ENCODE measurements at regions of chr13 and their contacts with region 1.

Region 1: DNA sequence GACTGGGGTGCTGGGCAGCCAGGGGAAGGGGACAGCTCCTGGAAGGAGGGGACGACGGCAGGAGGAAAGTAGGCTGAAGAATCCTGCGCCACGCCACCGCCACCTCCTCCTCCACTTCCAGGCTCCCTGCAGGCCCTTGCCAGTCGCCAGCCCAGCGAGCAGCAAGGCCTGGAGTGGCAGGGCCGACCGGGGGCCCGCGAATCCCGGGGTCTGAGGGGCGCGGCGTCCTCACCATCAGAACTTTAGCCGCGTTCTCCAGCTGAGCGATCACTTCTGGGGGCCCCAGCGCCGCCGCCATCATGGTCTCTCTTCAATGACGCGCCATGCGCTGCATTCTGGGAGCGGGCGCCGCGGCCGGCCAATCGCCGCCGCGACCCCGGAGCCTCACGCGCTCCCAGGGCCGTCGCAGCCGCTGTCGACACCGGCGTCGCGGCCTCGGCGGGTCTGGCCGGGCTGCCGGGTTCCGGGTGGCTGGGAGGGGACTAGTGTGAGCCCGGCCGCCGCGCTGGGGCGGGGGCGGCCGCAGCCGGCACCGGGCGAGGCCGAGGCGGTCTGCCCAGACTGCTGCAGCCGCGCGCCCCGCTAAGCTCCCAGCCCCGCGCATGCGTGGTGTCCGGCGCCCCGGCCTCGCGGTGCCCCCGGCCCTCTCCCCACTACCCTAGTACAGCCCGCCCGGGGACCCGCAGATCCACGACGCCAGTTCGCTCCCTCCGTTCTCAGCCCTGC is at the start of gene XPO4:
- DNase-seq: peak; percentile 87
- ATAC-seq: peak; percentile 96
- H3K4me3 Mint-ChIP-seq: peak within 1 kb of the TSS; percentile 95
- H3K27ac Mint-ChIP-seq: peak within 1 kb of the TSS; percentile 93
- H3K4me1 Mint-ChIP-seq: peaks cover 28% of the 10 kb centered on the region
- H3K27me3 Mint-ChIP-seq: no peaks in the 10 kb centered on the region
- total RNA-seq, gene XPO4: 18.6 to 19.8 TPM

Region 2: DNA sequence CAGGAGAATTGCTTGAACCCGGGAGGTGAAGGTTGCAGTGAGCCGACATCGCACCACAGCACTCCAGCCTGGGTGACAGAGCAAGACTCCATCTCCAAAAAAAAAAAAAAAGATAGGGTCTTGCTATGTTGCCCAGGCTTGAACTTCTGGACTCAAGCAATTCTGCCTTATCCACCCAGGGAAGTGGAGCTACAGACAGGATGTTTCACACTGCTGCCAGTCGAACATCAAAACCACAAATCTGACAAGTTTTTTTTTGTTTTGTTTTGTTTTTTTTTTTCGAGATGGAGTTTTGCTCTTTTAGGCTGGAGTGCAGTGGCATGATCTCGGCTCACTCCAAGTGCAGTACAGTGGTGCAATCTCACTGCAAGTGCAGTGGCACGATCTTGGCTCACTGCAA is 10.8 kb before region 1 on chr13:
- CTCF ChIA-PET with region 1: interaction called, 3 read pairs
- POLR2A ChIA-PET with region 1: interaction called, 14 read pairs
- DNase-seq: peak; percentile 27
- ATAC-seq: peak; percentile 55
- H3K4me3 Mint-ChIP-seq: no peak overlapping the region
- H3K27ac Mint-ChIP-seq: no peak overlapping the region
- H3K4me1 Mint-ChIP-seq: peaks cover 17% of the 10 kb centered on the region
- H3K27me3 Mint-ChIP-seq: no peaks in the 10 kb centered on the region

Measured in activated CD8-positive, alpha-beta T cell treated with anti-CD3 and anti-CD28 coated beads, Interleukin-2, amount 10 ng/mL, durations not matched to agents 7 days and 5 days (primary cell).